ENCODE measurements at regions of chr2 and their contacts with region 1.

Region 1: DNA sequence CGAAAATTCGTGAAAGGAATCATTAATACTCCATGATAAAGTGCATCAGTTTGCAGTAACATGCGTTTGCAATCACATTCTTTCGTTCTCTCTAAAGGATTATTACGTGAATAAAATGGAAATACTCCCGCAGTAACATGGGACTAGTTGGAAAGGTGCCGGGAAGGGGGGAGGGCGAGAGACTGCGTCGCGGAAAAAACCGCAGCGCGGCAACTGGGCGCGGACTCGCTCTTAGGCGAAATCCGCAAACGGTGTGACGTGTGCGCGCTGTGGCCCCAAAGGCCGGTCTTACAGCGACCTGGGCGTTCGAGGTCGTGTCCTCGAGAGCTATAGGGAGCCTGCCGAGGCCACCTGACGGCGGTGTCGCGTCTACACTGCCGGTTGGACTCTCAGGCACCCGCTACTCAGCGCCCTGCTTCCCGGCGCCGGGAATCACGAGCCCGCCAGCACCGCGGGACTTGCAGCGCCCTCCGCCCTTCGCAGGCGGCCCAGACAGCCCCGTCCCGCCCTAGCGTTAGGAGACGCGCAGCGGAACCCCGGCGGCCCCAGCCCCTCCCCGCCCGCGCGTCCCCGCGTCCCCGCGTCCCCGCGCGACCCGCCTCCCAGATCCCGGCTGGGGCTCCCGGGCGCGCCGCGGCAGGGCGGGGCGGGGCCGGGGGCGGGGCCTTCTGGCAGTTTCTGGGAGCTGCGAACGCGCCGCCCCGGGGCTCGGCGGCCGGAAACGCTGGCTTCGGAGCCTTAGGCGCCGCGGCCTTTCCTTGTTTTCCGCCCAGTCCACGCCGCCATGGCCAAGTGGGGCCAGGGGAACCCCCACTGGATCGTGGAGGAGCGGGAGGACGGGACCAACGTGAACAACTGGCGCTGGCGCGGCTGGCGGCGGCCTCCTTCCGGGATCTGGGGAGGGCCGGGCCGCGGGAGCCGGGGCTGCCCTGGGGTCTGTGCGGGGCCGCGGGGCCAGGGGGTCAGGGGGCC is 15.1 kb downstream of the C2orf74 start:
- DNase-seq: peak; percentile 78 to 95 (median 88)
- H3K4me3 ChIP-seq: peak overlapping the region; percentile 69 to 98 (median 87)
- H3K27ac ChIP-seq: peak overlapping the region; percentile 96 to 100 (median 99)
- H3K27me3 ChIP-seq: no peaks in the 10 kb centered on the region
- CTCF ChIP-seq: peak in 42 of 56 donors; percentile 2 to 61 (median 34)

Region 2: GRCh38 chr2:61044636-61045035 is 132.4 kb before region 1 on chr2:
- intact Hi-C with region 1: no loop called
- DNase-seq: no peak
- H3K4me3 ChIP-seq: no peak overlapping the region
- H3K27ac ChIP-seq: no peak overlapping the region
- H3K27me3 ChIP-seq: no peaks in the 10 kb centered on the region
- CTCF ChIP-seq: no peak

Region 3: DNA sequence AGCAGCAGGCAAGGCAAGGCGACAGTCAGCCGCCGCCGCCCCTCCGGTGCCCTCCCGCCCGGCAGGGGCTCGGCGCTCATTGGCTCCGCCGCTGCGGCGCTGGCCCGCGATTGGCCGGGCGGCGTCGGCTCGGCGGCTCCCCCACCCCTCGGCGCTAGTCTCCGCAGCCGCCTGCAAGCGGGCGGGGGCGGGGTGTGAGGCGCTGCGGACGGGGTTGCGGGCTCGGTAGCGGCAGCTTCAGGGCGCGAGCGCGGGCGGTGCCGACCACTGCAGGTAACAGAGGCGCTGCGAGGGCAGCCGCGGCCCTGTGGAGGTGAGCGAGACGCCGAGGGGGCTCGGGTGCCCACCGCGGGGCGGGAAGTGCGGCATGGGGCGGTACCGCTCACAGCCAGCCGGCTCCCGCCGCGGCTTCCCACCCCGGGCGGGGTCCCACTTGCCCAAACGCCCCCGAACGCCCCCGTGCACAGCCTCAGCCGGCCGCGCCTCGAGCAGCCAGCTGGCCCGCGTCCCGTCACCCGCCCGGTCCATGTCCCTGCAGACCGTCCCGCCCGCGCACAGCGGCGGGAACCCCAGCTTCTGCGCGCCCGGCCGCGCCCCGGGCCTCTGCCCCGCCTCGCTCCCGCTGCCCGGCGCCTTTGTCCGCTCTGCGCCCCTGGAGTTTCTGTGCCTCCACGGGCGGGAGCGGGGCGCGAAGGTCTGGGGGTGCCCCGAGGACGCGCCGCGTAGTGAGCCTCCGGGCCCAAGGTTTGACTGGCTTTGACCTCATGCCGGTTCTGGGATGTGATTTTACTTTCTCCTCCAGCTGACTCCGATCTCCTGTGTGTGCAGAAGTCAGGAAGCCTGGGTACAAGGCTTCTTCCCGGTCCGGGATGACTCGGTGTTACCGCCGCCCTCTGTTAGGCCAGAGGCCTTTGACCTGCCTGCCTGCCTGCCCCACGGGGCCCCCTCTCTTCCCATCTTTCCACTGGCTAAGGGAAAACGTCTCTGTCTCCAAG is 111.0 kb before region 1 on chr2 and contains the start of gene SANBR:
- intact Hi-C with region 1: loop called in 1 of 2 experiments (anchors 10 kb)
- DNase-seq: peak; percentile 72 to 96 (median 86)
- H3K4me3 ChIP-seq: peak within 1 kb of the TSS; percentile 60 to 99 (median 89)
- H3K27ac ChIP-seq: peak within 1 kb of the TSS in 57 of 59 donors; percentile 41 to 92 (median 82)
- H3K27me3 ChIP-seq: no peaks in the 10 kb centered on the region
- CTCF ChIP-seq: peak in 24 of 56 donors; percentile 2 to 48 (median 30)
- total RNA-seq, gene SANBR: 19.3 to 47.8 (median 32.5) TPM

Region 4: DNA sequence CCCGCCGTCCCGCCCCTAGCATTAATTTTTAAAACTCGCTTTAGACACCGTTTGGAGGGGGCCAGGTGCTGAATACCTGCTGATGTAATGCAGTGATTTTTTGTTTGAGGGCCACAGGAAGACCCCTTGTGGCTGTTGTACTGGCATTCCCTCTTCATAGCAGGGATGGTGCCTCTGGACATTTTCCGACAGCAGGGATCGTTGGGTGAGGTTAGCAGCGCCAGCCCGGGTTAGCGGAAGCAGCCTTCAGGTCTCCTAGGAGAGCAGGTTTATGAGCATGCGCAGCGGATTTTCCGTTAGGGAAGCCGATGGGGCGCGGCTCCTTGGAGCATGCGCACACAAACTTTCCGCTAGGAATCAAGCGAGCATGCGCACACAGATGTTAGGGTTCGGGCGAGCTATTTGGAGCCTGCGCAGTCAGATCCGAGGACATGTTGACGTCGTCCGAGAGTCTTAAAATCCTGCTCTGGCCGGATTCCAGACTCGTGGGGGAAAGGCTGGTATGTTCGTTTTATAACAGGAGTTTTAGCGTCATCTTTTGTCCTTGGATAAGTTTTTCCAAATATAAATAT is 32.3 kb before region 1 on chr2:
- intact Hi-C with region 1: loop called (anchors 5 kb)
- DNase-seq: peak; percentile 79 to 93 (median 88)
- H3K4me3 ChIP-seq: peak overlapping the region; percentile 51 to 96 (median 69)
- H3K27ac ChIP-seq: peak overlapping the region in 58 of 59 donors; percentile 31 to 96 (median 87)
- H3K27me3 ChIP-seq: no peaks in the 10 kb centered on the region
- CTCF ChIP-seq: peak in 29 of 56 donors; percentile 3 to 50 (median 26)

Region 5: GRCh38 chr2:61233581-61233980 is 56.5 kb after region 1 on chr2:
- intact Hi-C with region 1: no loop called
- DNase-seq: no peak
- H3K4me3 ChIP-seq: no peak overlapping the region
- H3K27ac ChIP-seq: no peak overlapping the region
- H3K27me3 ChIP-seq: no peaks in the 10 kb centered on the region
- CTCF ChIP-seq: no peak

Region 6: DNA sequence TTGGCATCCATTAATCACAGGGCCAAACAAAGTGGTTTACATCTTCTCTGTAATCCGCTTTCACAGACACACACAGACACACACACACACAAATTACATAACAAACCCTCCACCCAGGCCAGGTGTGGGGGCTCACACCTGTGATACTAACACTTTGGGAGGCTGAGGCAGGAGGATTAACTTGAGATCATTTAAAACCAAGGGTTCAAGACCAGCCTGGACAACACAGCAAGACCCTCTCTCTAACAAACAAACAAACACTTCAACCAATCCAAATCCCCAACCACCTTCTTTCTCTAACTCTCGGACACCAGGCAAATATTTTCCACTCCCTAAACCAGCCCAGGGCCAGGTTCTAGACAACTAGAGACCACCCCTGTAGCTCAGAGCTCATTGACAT is 440.6 kb after region 1 on chr2:
- intact Hi-C with region 1: no loop called
- DNase-seq: no peak
- H3K4me3 ChIP-seq: no peak overlapping the region
- H3K27ac ChIP-seq: no peak overlapping the region
- H3K27me3 ChIP-seq: no peaks in the 10 kb centered on the region
- CTCF ChIP-seq: no peak

Region 7: DNA sequence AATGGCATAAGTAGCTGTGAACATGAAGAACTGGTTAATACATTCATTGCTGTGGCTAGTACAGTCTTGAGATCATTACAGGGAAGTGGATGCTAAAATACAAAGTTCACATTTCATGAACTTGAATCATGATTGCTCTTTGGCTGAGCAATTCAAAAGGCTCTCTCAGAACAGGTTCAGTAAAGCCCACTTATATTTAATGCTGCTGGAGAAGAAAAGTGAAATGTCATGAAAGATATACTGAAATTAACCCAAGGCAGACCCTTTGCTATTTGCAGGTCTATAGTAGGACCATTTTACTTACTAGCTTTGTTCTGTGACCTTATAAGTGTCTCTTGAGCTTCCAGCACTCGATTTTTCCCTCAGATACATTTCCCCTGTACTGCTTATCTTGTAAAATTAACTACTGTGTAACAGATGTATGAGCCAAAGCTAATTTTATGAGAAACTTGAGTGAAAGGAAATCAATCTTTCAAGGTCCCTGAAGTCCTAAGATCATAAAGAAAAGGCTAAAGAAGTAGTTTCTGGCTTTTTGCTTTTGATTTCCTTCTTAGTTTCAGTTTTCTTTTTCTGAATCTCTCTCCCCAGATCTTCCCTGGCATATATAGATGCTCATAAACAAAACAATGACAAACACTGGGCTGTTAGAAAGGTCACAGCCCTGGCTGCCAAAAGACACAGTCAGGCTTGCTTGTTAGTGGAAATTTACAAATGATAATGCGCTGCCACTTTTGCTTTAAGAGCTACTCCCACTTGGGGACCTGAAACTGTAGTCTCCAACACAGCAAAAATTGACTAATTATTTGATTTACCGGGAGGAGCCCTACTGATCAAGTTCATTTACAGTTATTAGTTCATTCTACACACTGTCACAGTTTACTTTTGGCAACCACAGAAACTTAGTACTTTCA is 493.8 kb after region 1 on chr2:
- intact Hi-C with region 1: loop called in 1 of 2 experiments (anchors 5 kb)
- DNase-seq: peak in 8 of 10 donors; percentile 16 to 78 (median 52)
- H3K4me3 ChIP-seq: peak overlapping the region in 58 of 59 donors; percentile 5 to 65 (median 41)
- H3K27ac ChIP-seq: peak overlapping the region; percentile 76 to 100 (median 98)
- H3K27me3 ChIP-seq: no peaks in the 10 kb centered on the region
- CTCF ChIP-seq: peak in 5 of 56 donors; percentile 16 to 29 (median 20)